Motor neuron (in vitro differentiated cells): ENCODE measurements at regions of chr14 and their contacts with region 1.

Region 1: GRCh38 chr14:69879175-69880043 is at the start of gene SMOC1:
- ATAC-seq: peak; percentile 87 to 96 (median 94)
- H3K4me3 ChIP-seq: peak within 1 kb of the TSS; percentile 39 to 96 (median 46)
- H3K27ac ChIP-seq: no peak within 1 kb of the TSS
- H3K4me1 ChIP-seq: peaks cover 0 to 3% of the 10 kb centered on the region in 2 donors
- total RNA-seq, gene SMOC1: 0.18 to 18.7 (median 2.1) TPM

Region 2: GRCh38 chr14:69749956-69750355 is 129.5 kb before region 1 on chr14:
- in situ Hi-C with region 1: no loop called
- ATAC-seq: no peak
- H3K4me3 ChIP-seq: no peak overlapping the region
- H3K27ac ChIP-seq: no peak overlapping the region
- H3K4me1 ChIP-seq: no peaks in the 10 kb centered on the region

Region 3: GRCh38 chr14:69796797-69797500 is 82.5 kb before region 1 on chr14 and contains the start of gene SLC10A1:
- in situ Hi-C with region 1: no loop called
- ATAC-seq: no peak
- H3K4me3 ChIP-seq: no peak within 1 kb of the TSS
- H3K27ac ChIP-seq: no peak within 1 kb of the TSS
- H3K4me1 ChIP-seq: no peaks in the 10 kb centered on the region
- total RNA-seq, gene SLC10A1: 0.82 to 2.8 (median 0.98) TPM

Region 4: DNA sequence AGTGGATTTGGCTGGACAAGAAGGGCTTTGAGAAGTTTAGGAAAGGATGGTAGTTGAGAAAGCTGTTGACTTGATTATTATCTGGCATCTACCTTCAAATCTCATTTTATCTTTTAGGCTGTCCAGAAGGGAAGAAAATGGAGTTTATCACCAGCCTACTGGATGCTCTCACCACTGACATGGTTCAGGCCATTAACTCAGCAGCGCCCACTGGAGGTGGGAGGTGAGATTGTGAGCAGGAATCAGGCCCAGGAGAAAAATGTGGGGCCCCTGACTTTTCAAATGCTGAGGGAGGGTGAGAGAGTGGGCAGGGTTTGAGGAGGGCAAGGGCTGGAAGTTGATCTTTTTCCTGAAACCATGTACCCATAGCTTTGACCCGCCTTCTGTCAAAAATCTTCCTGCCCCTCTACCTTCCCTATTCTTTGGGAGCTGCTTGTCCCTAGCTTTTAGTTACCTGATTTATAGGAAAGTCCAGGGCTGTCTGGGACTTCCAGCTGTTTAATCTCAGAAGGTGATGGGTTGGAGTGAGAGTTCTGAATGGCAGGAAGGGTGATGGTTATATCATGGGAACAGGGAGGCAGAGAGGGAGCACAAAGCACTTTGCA is 134.0 kb after region 1 on chr14:
- in situ Hi-C with region 1: loop called in 1 of 9 experiments (anchors 25 kb)
- ATAC-seq: peak in 3 of 8 experiments; percentile 45 to 74 (median 53)
- H3K4me3 ChIP-seq: no peak overlapping the region
- H3K27ac ChIP-seq: no peak overlapping the region
- H3K4me1 ChIP-seq: peaks cover 24 to 34% of the 10 kb centered on the region in 2 donors

Region 5: GRCh38 chr14:70600382-70601157 is 721.2 kb after region 1 on chr14 and contains the start of gene MED6:
- in situ Hi-C with region 1: no loop called
- ATAC-seq: peak; percentile 94 to 99 (median 98)
- H3K4me3 ChIP-seq: peak within 1 kb of the TSS; percentile 82 to 100 (median 94)
- H3K27ac ChIP-seq: peak within 1 kb of the TSS; percentile 78 to 91
- H3K4me1 ChIP-seq: peaks cover 7 to 12% of the 10 kb centered on the region in 2 donors
- total RNA-seq, gene MED6: 28.3 to 49.0 (median 35.8) TPM

Region 6: DNA sequence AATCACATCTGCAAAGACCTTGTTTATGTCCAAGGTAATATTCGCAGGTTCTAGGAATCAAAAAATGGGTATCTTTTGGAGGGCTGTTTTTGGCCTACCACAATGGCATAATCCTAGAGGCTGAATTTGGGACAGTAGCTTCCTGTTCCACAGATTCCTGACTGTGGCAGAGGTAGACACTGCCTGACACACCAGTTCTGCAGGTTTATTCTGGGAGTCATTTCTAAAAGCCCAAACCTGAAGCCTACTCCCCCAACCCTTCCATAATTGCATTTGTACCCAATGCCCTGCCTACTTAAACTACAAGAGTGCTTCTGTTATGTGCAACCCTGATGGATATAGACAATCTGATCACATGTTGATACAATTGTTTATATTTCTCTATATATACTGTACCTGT is 1406.7 kb after region 1 on chr14:
- in situ Hi-C with region 1: no loop called
- ATAC-seq: no peak
- H3K4me3 ChIP-seq: no peak overlapping the region
- H3K27ac ChIP-seq: no peak overlapping the region
- H3K4me1 ChIP-seq: peaks cover 0 to 4% of the 10 kb centered on the region in 2 donors